ENCODE measurements at regions of chr1 and their contacts with region 1.

Region 1: GRCh38 chr1:204494281-204495077 is at the start of gene PIK3C2B:
- DNase-seq: peak; percentile 80
- ATAC-seq: peak; percentile 86
- H3K4me3 Mint-ChIP-seq: peak within 1 kb of the TSS; percentile 77
- H3K27ac Mint-ChIP-seq: peak within 1 kb of the TSS; percentile 89
- H3K4me1 Mint-ChIP-seq: peaks cover 58% of the 10 kb centered on the region
- H3K27me3 Mint-ChIP-seq: peaks cover 2% of the 10 kb centered on the region
- total RNA-seq, gene PIK3C2B: 26.2 to 28.4 TPM

Region 2: DNA sequence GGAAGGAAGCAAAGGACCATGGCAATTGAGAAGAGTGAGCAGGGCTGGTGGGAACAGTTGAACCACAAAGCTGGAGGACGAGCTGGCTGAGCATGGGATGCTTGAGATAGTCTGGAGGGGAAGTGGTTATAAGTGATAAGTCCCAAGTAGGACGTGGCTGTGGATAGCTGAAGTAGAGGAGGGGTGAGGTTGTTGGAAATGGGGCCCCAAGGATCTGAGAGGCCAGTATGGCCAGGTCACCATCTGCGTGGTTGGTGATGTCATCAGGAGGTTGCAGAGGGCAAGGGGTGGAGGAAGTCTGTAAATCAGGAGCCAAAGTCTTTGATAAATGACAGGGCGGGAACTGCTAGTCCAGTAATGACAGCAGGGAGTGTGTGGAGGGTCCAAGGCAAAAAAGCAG is 317.3 kb before region 1 on chr1:
- CTCF ChIA-PET with region 1: no interaction called
- POLR2A ChIA-PET with region 1: no interaction called
- DNase-seq: no peak
- ATAC-seq: no peak
- H3K4me3 Mint-ChIP-seq: no peak overlapping the region
- H3K27ac Mint-ChIP-seq: no peak overlapping the region
- H3K4me1 Mint-ChIP-seq: no peaks in the 10 kb centered on the region
- H3K27me3 Mint-ChIP-seq: peaks cover 2% of the 10 kb centered on the region

Region 3: GRCh38 chr1:204411451-204412204 is 82.9 kb before region 1 on chr1 and contains the start of gene PPP1R15B:
- CTCF ChIA-PET with region 1: interaction called, 11 read pairs
- POLR2A ChIA-PET with region 1: no interaction called
- DNase-seq: peak; percentile 98
- ATAC-seq: peak; percentile 90
- H3K4me3 Mint-ChIP-seq: peak within 1 kb of the TSS; percentile 99
- H3K27ac Mint-ChIP-seq: peak within 1 kb of the TSS; percentile 100
- H3K4me1 Mint-ChIP-seq: peaks cover 12% of the 10 kb centered on the region
- H3K27me3 Mint-ChIP-seq: no peaks in the 10 kb centered on the region
- total RNA-seq, gene PPP1R15B: 64.7 to 66.0 TPM

Region 4: DNA sequence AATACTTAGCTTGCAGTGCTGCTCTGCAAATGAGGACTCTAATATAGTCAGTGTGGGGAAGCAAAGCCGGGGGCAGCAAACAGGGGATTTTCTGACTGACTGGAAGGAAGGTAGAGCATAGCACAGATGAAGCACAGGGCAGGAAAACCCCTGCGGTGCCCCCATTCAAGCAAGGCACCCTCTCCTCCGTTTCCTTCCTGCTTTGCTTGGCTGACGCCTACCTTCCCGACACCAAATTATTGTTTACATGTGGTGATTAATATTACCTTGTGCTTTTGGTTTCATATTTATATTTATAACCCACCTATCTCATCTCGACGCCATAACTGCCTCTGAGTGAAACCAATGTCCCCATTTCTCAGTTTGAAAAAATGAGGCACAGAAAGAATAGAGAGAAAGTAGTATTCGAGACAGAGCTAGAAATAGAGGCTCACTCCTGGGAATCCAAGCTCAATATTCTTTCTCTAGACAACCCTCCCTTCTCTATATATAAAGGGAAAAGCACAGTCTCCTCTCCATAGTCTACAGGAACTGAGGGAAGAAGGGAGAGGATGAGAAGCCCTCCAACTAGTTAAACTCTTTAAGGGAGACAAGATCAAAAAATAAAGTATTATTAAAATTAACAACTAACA is 41.2 kb before region 1 on chr1:
- CTCF ChIA-PET with region 1: interaction called, 1,090 read pairs
- POLR2A ChIA-PET with region 1: interaction called, 18 read pairs
- DNase-seq: peak; percentile 75
- ATAC-seq: peak; percentile 93
- H3K4me3 Mint-ChIP-seq: peak overlapping the region; percentile 66
- H3K27ac Mint-ChIP-seq: peak overlapping the region; percentile 89
- H3K4me1 Mint-ChIP-seq: peaks cover 31% of the 10 kb centered on the region
- H3K27me3 Mint-ChIP-seq: no peaks in the 10 kb centered on the region

Region 5: GRCh38 chr1:204480515-204480914 is 14.0 kb before region 1 on chr1:
- CTCF ChIA-PET with region 1: interaction called, 33 read pairs
- POLR2A ChIA-PET with region 1: interaction called, 18 read pairs
- DNase-seq: no peak
- ATAC-seq: peak; percentile 32
- H3K4me3 Mint-ChIP-seq: no peak overlapping the region
- H3K27ac Mint-ChIP-seq: no peak overlapping the region
- H3K4me1 Mint-ChIP-seq: peaks cover 34% of the 10 kb centered on the region
- H3K27me3 Mint-ChIP-seq: no peaks in the 10 kb centered on the region

Region 6: GRCh38 chr1:204516180-204516879 is 21.9 kb after region 1 on chr1 and contains the start of gene MDM4:
- CTCF ChIA-PET with region 1: interaction called, 3 read pairs
- POLR2A ChIA-PET with region 1: interaction called, 27 read pairs
- DNase-seq: peak; percentile 97
- ATAC-seq: peak; percentile 83
- H3K4me3 Mint-ChIP-seq: no peak within 1 kb of the TSS
- H3K27ac Mint-ChIP-seq: no peak within 1 kb of the TSS
- H3K4me1 Mint-ChIP-seq: peaks cover 65% of the 10 kb centered on the region
- H3K27me3 Mint-ChIP-seq: no peaks in the 10 kb centered on the region
- total RNA-seq, gene MDM4: 72.2 to 72.4 TPM